ENCODE measurements at regions of chr21 and their contacts with region 1.

Region 1: GRCh38 chr21:15729674-15730483 is at the start of gene USP25:
- DNase-seq: peak; percentile 79 to 93
- ATAC-seq: peak; percentile 81 to 94 (median 83)
- H3K4me3 ChIP-seq: peak within 1 kb of the TSS; percentile 63
- H3K4me3 Mint-ChIP-seq: peak within 1 kb of the TSS; percentile 95
- H3K27ac ChIP-seq: peak within 1 kb of the TSS; percentile 80
- H3K27ac Mint-ChIP-seq: peak within 1 kb of the TSS; percentile 91 to 93
- H3K4me1 ChIP-seq: peaks cover 15% of the 10 kb centered on the region
- H3K4me1 Mint-ChIP-seq: peaks cover 30 to 42% of the 10 kb centered on the region in 2 donors
- H3K27me3 ChIP-seq: no peaks in the 10 kb centered on the region
- H3K27me3 Mint-ChIP-seq: peaks cover 0 to 3% of the 10 kb centered on the region in 2 donors
- CTCF ChIP-seq: no peak
- total RNA-seq, gene USP25: 67.0 to 95.4 (median 76.4) TPM

Region 2: DNA sequence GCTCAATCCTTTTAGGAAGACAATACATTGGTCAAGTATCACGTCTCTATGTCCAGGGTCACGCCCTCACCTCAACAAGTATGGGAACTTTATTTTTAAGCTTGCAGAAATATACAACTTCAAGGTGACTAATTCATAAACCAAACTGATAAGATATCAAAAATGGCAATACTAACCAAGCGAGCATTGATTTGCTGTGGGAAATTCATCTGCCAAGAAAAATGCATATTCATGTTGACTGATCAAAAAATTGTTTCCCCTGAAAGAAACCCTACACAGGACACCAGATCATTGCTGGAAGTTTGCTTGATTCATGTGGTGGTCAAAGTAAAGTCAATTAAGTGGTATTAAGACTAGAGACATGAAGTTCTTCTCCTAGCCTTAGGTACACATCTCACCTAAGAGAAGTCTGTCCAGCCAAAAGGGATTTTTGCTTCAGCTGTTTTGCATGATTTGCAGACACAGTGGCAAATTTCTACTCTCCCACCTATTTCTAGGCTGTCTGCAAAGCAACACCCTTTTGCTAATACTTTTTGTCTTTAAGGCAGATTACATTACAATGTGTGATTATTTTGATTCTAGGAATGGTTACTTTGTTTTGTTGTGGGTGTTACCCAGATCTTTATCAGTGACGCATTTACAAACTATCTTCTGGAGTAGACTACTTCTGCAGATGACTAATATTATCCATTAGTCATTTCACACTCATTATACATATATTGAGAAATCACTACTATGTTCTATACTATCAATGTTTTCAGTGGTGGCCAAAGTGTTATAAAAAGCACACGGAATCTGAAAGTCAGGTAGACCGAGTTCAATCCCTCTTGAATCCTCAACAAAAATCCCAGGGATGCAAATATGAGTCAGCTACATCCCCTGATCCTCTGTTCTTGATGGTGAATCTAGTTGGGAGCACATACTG is 1196.1 kb before region 1 on chr21:
- intact Hi-C with region 1: loop called (anchors 10 kb)
- DNase-seq: peak in 1 of 2 donors; percentile 84
- ATAC-seq: peak; percentile 83 to 87 (median 85)
- H3K4me3 ChIP-seq: peak overlapping the region; percentile 19
- H3K4me3 Mint-ChIP-seq: peak overlapping the region; percentile 82
- H3K27ac ChIP-seq: peak overlapping the region; percentile 93
- H3K27ac Mint-ChIP-seq: peak overlapping the region; percentile 93 to 95
- H3K4me1 ChIP-seq: peaks cover 8% of the 10 kb centered on the region
- H3K4me1 Mint-ChIP-seq: peaks cover 37 to 60% of the 10 kb centered on the region in 2 donors
- H3K27me3 ChIP-seq: no peaks in the 10 kb centered on the region
- H3K27me3 Mint-ChIP-seq: no peaks in the 10 kb centered on the region
- CTCF ChIP-seq: no peak

Region 3: GRCh38 chr21:15514073-15514946 is 215.6 kb before region 1 on chr21:
- intact Hi-C with region 1: loop called (anchors 5 kb)
- DNase-seq: peak; percentile 36 to 82
- ATAC-seq: peak; percentile 90 to 96 (median 93)
- H3K4me3 ChIP-seq: no peak overlapping the region
- H3K4me3 Mint-ChIP-seq: peak overlapping the region; percentile 76
- H3K27ac ChIP-seq: peak overlapping the region; percentile 79
- H3K27ac Mint-ChIP-seq: peak overlapping the region; percentile 72 to 91
- H3K4me1 ChIP-seq: peaks cover 9% of the 10 kb centered on the region
- H3K4me1 Mint-ChIP-seq: peaks cover 25 to 34% of the 10 kb centered on the region in 2 donors
- H3K27me3 ChIP-seq: no peaks in the 10 kb centered on the region
- H3K27me3 Mint-ChIP-seq: no peaks in the 10 kb centered on the region
- CTCF ChIP-seq: no peak

Region 4: GRCh38 chr21:15768045-15768601 is 38.2 kb after region 1 on chr21:
- intact Hi-C with region 1: loop called (anchors 5 kb)
- DNase-seq: no peak
- ATAC-seq: no peak
- H3K4me3 ChIP-seq: no peak overlapping the region
- H3K4me3 Mint-ChIP-seq: no peak overlapping the region
- H3K27ac ChIP-seq: no peak overlapping the region
- H3K27ac Mint-ChIP-seq: peak overlapping the region in 1 of 2 donors; percentile 16
- H3K4me1 ChIP-seq: no peaks in the 10 kb centered on the region
- H3K4me1 Mint-ChIP-seq: peaks cover 61 to 62% of the 10 kb centered on the region in 2 donors
- H3K27me3 ChIP-seq: no peaks in the 10 kb centered on the region
- H3K27me3 Mint-ChIP-seq: no peaks in the 10 kb centered on the region
- CTCF ChIP-seq: no peak

Region 5: GRCh38 chr21:15823486-15824150 is 93.7 kb after region 1 on chr21:
- intact Hi-C with region 1: loop called (anchors 2 kb)
- DNase-seq: peak in 1 of 2 donors; percentile 64
- ATAC-seq: peak; percentile 82 to 94 (median 84)
- H3K4me3 ChIP-seq: no peak overlapping the region
- H3K4me3 Mint-ChIP-seq: peak overlapping the region; percentile 72
- H3K27ac ChIP-seq: peak overlapping the region; percentile 4
- H3K27ac Mint-ChIP-seq: peak overlapping the region; percentile 46 to 77
- H3K4me1 ChIP-seq: peaks cover 5% of the 10 kb centered on the region
- H3K4me1 Mint-ChIP-seq: peaks cover 25 to 26% of the 10 kb centered on the region in 2 donors
- H3K27me3 ChIP-seq: no peaks in the 10 kb centered on the region
- H3K27me3 Mint-ChIP-seq: no peaks in the 10 kb centered on the region
- CTCF ChIP-seq: no peak